Activated CD4-positive, alpha-beta memory T cell treated with anti-CD3 and anti-CD28 coated beads, Interleukin-2, amount 10 ng/mL, durations not matched to agents 7 days and 5 days (primary cell): ENCODE measurements at regions of chr2 and their contacts with region 1.

Region 1: GRCh38 chr2:96208143-96209010 is at the start of gene STARD7:
- DNase-seq: peak; percentile 98
- H3K4me3 Mint-ChIP-seq: peak within 1 kb of the TSS; percentile 87
- H3K27ac Mint-ChIP-seq: peak within 1 kb of the TSS; percentile 83
- H3K4me1 Mint-ChIP-seq: peaks cover 52% of the 10 kb centered on the region
- H3K27me3 Mint-ChIP-seq: no peaks in the 10 kb centered on the region
- total RNA-seq, gene STARD7: 108 to 113 TPM

Region 2: GRCh38 chr2:96138179-96139145 is 69.9 kb before region 1 on chr2 and contains the start of gene ASTL:
- CTCF ChIA-PET with region 1: interaction called, 11 read pairs
- POLR2A ChIA-PET with region 1: interaction called, 35 read pairs
- DNase-seq: peak; percentile 72
- H3K4me3 Mint-ChIP-seq: no peak within 1 kb of the TSS
- H3K27ac Mint-ChIP-seq: no peak within 1 kb of the TSS
- H3K4me1 Mint-ChIP-seq: peaks cover 19% of the 10 kb centered on the region
- H3K27me3 Mint-ChIP-seq: no peaks in the 10 kb centered on the region
- total RNA-seq, gene ASTL: 0.25 to 0.53 TPM

Region 3: DNA sequence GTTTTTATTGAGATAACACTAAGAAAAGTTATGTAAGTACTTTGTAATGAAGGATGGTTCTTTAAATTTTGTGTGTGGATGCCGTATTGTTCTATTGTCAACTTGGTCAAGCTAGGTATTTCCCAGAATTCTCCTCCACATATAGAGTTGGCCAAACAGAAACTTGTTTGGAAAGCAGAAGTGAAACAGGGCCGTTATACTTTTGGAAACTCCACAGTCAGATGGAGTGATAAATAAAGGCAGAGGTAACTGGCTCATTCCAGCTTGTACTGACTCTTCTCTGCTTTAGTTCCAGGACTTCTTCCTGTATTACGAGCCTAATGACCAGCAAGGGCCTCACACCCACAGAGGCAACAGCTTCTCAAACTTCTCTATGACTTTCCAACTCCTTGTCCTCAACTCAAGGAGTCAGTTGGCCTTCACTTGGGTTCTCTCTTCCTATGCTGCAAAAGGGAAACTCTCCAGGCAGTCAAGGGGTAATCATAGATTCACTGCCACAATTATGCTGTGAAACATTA is 16.7 kb after region 1 on chr2:
- CTCF ChIA-PET with region 1: no interaction called
- POLR2A ChIA-PET with region 1: interaction called, 12 read pairs
- DNase-seq: no peak
- H3K4me3 Mint-ChIP-seq: no peak overlapping the region
- H3K27ac Mint-ChIP-seq: no peak overlapping the region
- H3K4me1 Mint-ChIP-seq: peaks cover 9% of the 10 kb centered on the region
- H3K27me3 Mint-ChIP-seq: no peaks in the 10 kb centered on the region

Region 4: DNA sequence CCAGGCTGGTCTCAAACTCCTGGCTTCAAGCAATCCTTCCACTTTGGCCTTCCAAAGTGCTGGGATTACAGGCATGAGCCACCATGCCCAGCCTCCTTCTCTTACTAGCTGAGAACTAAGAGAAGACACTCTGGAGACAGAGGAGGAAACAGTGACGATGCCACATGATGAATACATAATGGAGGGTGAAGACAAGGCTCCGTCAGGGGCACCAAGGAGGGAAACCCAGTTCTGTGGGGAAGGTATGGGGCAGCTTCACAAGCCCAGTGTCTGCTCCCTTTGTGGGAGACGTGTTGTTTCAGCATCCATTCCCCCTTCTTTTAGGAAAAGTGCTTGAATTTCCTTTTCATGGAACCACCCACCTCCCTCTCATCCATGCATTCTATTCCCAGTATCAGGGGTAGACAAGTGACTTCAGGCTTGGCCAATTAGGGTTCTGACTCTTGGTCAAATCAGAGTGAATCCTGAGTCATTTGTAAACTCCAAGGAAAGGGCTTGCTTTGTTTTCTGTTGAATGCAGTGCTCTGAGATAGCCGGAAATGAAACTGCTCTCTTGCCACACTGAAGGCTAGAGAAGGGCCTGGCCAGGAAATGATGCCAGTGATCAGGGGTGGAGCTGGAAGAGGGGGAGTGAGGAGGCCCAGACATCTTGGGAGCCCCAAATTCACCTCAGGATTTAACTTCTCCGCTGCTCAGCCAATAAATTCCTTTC is 33.7 kb after region 1 on chr2:
- CTCF ChIA-PET with region 1: interaction called, 9 read pairs
- POLR2A ChIA-PET with region 1: interaction called, 39 read pairs
- DNase-seq: peak; percentile 77
- H3K4me3 Mint-ChIP-seq: peak overlapping the region; percentile 31
- H3K27ac Mint-ChIP-seq: peak overlapping the region; percentile 91
- H3K4me1 Mint-ChIP-seq: peaks cover 54% of the 10 kb centered on the region
- H3K27me3 Mint-ChIP-seq: no peaks in the 10 kb centered on the region

Region 5: GRCh38 chr2:96265840-96266679 is 57.7 kb after region 1 on chr2 and contains the starts of genes CIAO1 and TMEM127:
- CTCF ChIA-PET with region 1: interaction called, 15 read pairs
- POLR2A ChIA-PET with region 1: interaction called, 31 read pairs
- DNase-seq: peak; percentile 99
- H3K4me3 Mint-ChIP-seq: peak within 1 kb of the TSS; percentile 99
- H3K27ac Mint-ChIP-seq: peak within 1 kb of the TSS; percentile 94
- H3K4me1 Mint-ChIP-seq: peaks cover 47% of the 10 kb centered on the region
- H3K27me3 Mint-ChIP-seq: no peaks in the 10 kb centered on the region
- total RNA-seq, gene CIAO1: 64.4 to 67.4 TPM
- total RNA-seq, gene TMEM127: 42.4 to 44.0 TPM

Region 6: DNA sequence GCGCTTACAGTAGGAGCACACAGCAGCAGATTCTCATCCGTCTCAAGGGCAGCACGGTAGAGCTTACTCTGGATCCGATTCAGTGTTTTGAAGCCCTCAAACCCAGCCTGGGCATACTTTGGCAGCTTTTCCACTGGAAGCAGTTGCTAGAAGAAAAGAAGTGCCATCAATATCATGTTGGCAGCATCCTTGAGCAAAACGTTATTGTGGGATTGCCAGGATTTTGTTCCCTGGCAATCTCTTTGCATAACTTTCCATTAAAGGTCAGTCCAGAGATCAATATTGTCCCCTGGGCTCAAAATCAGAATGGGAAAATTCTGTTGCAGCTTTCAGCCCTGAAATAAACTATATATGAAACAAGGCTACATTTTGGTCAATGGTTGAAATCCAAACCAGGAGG is 88.5 kb after region 1 on chr2:
- CTCF ChIA-PET with region 1: no interaction called
- POLR2A ChIA-PET with region 1: no interaction called
- DNase-seq: no peak
- H3K4me3 Mint-ChIP-seq: no peak overlapping the region
- H3K27ac Mint-ChIP-seq: peak overlapping the region; percentile 24
- H3K4me1 Mint-ChIP-seq: peaks cover 12% of the 10 kb centered on the region
- H3K27me3 Mint-ChIP-seq: no peaks in the 10 kb centered on the region

Region 7: DNA sequence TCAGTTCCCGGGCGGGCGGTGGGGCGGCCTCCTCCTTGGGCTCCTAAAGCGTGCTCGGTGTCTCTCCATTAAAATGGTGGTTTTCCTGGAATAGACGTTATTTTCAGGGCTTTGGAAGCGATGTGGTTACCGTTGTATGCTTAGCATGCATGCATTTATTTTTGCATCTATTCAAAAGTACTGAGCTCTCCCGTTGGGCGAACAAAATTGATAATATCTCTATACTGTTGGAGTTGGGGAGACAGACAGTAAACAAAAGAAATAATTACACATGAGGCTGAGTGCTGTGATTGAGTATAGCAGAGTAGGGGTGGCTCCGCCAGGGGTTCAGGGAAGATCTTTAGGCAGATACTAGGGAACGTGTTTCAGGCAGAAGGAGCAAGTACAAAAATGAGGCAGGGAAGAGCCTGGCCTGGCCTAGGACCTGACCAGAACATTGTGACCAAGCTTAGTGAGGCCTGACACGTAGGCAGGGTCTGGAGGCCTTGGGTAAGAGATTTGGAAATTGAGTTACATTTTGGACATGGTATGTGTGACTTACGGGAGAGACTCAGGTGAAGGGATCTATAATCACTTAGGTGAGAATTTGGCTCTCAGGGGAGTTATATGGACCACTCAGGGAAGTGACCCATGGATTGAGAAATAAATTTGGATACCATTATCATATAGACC is 127.9 kb after region 1 on chr2:
- CTCF ChIA-PET with region 1: no interaction called
- POLR2A ChIA-PET with region 1: interaction called, 12 read pairs
- DNase-seq: no peak
- H3K4me3 Mint-ChIP-seq: peak overlapping the region; percentile 81
- H3K27ac Mint-ChIP-seq: peak overlapping the region; percentile 73
- H3K4me1 Mint-ChIP-seq: peaks cover 66% of the 10 kb centered on the region
- H3K27me3 Mint-ChIP-seq: no peaks in the 10 kb centered on the region